GM18951 (cell line): ENCODE measurements at regions of chr4 and their contacts with region 1.

Region 1: DNA sequence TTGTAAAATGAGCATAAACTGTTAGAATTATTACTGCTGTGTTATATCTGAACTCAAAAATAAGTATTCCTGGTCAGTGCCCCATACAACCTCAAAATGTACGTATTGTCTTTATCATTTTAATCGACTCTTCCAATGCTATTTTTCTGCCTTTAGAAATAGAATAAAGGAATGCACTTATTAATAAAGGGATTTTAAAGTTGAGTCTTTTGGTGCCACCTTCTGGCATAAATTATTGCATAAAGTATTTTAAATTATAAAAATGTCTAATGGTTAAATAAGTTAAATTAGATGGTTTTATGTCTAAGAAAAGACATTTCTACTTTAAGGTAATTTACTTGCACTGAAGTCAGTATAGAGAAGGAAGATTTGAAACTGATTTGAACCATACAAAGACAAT is 424.0 kb upstream of the NDST4 start:
- POLR2A ChIP-seq: no peak

Region 2: DNA sequence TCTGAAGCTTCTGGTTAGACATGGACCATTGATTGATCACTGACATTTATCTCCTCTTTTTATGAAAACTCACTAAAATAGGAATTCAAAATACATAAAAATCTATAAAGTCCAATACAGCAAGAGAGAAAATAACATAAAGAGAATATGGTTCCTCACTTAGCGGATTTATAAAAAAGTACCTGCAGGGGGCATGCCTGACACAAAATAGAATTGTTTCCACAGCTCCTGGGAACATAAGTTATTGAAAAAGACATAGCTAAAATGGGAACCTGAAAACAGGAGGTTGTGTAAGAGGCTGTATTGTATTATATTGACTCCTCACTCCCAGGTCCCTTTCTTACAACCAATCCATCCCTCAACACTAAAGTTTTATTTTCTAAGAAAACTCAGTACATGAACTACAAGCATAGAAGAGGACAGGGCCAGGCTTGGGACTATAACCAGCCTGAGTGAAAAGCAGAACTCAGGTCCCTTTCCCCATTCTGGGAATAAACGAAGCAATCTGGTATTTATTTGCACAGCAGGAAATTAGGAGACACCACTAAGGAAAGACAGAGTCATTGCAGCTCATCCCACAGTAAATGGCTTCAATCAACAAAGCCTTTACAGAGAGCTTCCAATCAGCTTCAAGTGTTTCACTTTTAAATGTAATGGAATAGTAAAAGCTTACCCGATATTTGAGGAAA is 302.8 kb before region 1 on chr4:
- in situ Hi-C with region 1: loop called (anchors 25 kb)
- POLR2A ChIP-seq: no peak

Region 3: DNA sequence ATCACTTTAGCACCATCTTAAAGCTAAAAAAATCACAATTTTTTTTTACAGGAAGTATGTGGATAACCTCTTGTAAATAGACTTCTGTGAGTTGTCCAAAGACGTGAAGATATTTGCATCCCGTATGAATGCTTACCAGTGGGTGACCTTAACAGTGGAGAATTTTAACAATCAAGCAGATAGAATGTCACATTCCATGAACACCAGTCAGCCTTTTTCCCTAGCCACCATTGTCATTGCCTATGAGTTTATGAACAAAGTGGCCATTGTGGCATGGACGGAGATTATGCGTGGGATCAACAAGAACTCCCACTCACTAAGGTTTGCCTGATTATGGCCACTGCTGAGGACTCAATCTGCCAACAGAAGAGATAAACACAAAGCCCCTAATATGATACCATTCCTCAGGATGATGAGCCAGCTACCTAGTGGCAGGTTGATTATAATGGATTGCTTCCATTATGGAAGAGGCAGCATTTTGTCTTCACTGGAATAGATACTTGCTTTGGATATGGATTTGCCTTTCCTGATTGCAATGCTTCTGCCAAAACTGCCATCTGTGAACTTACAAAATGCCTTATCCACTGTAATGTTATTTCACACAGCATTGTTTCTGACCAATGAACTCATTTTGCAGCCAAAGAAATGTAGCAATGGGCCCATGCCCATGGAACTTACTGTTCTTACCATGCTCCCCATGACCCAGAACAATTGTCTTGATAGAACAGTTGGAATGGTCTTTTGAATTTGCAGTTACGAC is 406.9 kb after region 1 on chr4:
- in situ Hi-C with region 1: no loop called
- POLR2A ChIP-seq: no peak

Region 4: GRCh38 chr4:116055857-116056827 is 518.8 kb after region 1 on chr4:
- in situ Hi-C with region 1: no loop called
- POLR2A ChIP-seq: no peak